ENCODE measurements at regions of chr22 and their contacts with region 1.

Region 1: DNA sequence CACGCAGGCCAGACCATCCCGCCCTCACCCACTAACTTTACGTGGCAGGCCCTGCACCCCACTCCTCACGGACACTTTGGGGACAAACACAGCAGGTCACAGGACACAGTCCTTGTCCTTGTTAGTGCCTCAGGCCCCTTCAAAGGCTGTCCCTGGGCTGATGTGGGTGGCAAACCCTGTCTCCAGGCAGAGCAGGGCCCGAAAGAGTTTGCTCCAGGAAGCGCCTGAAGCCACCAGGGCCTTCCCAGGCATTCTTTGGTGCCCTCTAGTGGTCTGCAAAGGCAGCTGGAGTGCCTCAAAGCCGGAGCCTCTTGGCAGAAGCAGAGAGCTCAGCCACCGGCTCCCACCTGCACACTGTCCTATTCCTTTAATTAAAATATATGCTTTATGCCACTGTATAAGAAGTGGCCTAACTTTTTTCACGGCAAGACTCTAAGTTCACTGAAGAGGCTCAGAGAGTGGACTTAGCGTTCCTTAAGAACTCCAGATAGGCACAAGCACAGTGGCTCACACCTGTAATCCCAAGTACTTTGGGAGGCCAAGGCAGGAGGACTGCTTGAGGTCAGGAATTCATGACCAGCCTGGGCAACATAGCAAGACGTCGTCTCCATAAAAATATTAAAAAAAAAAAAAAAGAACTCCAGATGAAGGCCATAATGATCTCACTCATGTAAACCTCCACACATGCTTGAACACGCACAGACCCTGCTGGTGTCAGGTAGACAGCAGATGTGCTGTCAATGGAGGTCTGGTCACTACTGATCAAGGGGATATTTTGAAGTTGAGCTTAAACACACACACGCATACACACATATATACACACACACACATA is 11.1 kb downstream of the TXN2 start:
- DNase-seq: peak; percentile 78 to 95
- H3K4me3 ChIP-seq: no peak overlapping the region
- CTCF ChIP-seq: peak in 1 of 3 donors; percentile 56
- POLR2A ChIP-seq: no peak

Region 2: GRCh38 chr22:36301384-36301828 is 169.0 kb before region 1 on chr22:
- intact Hi-C with region 1: loop called (anchors 5 kb)
- DNase-seq: peak; percentile 71 to 94
- H3K4me3 ChIP-seq: no peak overlapping the region
- CTCF ChIP-seq: peak in 1 of 3 donors; percentile 88
- POLR2A ChIP-seq: no peak

Measured in lower leg skin (tissue), 4 donors.